Heart right ventricle (tissue), 16 donors: ENCODE measurements at regions of chr6 and their contacts with region 1.

Region 1: GRCh38 chr6:122984393-122984792 is 11.6 kb upstream of the CLVS2 start:
- DNase-seq: no peak
- ATAC-seq: no peak
- H3K4me3 ChIP-seq: no peak overlapping the region
- H3K27ac ChIP-seq: no peak overlapping the region
- H3K4me1 ChIP-seq: no peaks in the 10 kb centered on the region
- H3K27me3 ChIP-seq: no peaks in the 10 kb centered on the region
- CTCF ChIP-seq: no peak

Region 2: DNA sequence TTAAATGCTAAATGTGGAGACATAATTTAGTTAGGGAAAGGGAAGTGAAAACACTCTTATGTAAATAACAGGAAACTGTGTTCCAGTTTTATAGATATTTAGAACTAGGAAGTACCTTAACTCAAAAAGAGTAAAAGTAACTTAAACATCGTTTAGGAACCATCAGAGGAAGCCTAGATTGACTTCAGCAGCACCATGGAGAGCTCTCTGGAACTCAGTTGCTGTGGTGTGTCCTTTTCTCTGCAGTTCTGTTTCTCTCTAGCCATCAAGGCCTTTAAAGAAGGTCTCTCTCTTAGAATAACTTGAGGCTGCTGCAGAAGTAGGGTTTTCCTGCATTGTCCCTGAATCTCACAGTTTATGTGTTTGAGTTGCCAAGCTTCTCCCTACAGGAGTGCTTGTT is 38.6 kb after region 1 on chr6:
- intact Hi-C with region 1: loop called in 1 of 10 experiments (anchors 2 kb)
- DNase-seq: no peak
- ATAC-seq: no peak
- H3K4me3 ChIP-seq: no peak overlapping the region
- H3K27ac ChIP-seq: no peak overlapping the region
- H3K4me1 ChIP-seq: no peaks in the 10 kb centered on the region
- H3K27me3 ChIP-seq: no peaks in the 10 kb centered on the region
- CTCF ChIP-seq: no peak